ENCODE measurements at regions of chr11 and their contacts with region 1.

Region 1: DNA sequence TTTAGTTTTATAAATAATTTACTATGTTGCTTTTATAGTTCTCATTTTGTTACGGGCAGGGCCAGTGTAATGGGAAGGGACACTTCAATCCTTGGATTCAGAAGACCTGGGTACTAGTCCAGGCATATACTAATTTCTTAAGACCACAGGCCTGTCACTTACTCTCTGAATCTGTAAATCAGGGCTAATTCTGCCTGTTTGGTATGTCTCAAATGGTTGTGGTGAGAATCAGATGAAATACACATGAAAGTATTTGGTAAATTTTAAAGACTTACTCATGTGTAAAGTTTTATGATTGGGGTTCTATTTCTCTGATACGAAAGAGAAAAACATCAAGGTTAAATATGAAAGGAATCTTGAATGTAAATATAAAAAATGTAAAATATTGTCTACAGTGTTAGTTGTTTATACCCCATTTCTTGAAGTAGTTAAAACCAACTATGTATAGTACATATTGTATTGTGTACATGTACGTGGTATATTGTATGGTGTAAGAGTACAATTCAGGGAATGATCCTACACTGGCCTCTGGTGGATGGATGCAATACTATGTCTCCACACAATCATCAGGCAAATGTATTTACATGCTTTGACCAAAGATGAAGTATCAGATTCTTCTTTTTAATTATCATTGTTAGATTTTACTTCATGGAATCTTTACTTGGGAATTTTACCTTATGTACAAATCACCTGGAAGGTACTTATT is 24.5 kb upstream of the RAG2 start:
- DNase-seq: no peak
- ATAC-seq: no peak
- H3K4me3 ChIP-seq: no peak overlapping the region
- H3K27ac ChIP-seq: no peak overlapping the region
- H3K4me1 ChIP-seq: peaks cover 8 to 10% of the 10 kb centered on the region in 2 donors
- H3K27me3 ChIP-seq: no peaks in the 10 kb centered on the region
- CTCF ChIP-seq: no peak
- POLR2A ChIP-seq: no peak

Region 2: GRCh38 chr11:36488096-36488495 is 134.5 kb before region 1 on chr11:
- in situ Hi-C with region 1: no loop called
- intact Hi-C with region 1: no loop called
- DNase-seq: no peak
- ATAC-seq: no peak
- H3K4me3 ChIP-seq: no peak overlapping the region
- H3K27ac ChIP-seq: peak overlapping the region in 3 of 4 donors; percentile 16 to 54 (median 22)
- H3K4me1 ChIP-seq: peaks cover 11 to 20% of the 10 kb centered on the region in 2 donors
- H3K27me3 ChIP-seq: no peaks in the 10 kb centered on the region
- CTCF ChIP-seq: no peak
- POLR2A ChIP-seq: no peak

Region 3: DNA sequence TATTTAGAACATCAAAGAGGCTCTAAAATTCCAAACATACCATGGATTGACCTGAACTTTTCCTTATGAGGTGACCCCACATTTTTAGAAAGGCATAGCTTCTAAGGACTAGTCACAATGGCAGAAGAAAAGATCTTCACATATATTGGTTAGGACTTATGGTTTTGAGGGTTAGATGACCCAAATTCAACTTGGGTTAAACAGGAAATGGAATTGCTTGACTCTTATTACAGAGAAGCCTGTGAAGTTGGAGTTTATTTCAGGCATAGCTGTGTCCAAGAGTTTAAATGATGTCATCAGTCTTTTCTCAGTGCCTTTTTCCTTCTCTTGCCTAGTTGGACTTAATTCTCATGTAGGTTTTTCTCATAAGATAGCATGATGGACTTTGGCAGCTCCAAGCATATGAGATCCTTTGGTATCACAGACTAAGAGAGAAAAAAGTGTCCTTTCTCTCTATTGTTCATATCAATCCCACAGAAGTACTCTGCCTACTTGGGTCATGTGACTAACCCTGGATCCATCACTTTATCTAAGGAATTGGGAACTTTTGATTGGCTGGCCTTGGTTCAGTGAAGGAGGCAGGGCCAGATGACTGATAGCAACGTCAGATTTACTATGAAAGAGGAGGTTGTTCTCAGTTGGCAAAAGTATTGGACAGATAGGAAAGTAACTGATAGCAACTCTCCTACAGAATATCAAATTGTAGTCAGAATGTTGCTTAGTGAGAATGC is 72.0 kb before region 1 on chr11:
- in situ Hi-C with region 1: no loop called
- intact Hi-C with region 1: no loop called
- DNase-seq: no peak
- ATAC-seq: no peak
- H3K4me3 ChIP-seq: no peak overlapping the region
- H3K27ac ChIP-seq: no peak overlapping the region
- H3K4me1 ChIP-seq: no peaks in the 10 kb centered on the region
- H3K27me3 ChIP-seq: no peaks in the 10 kb centered on the region
- CTCF ChIP-seq: no peak
- POLR2A ChIP-seq: no peak

Region 4: GRCh38 chr11:36583667-36584066 is 38.9 kb before region 1 on chr11:
- in situ Hi-C with region 1: no loop called
- intact Hi-C with region 1: loop called (anchors 5 kb)
- DNase-seq: no peak
- ATAC-seq: no peak
- H3K4me3 ChIP-seq: no peak overlapping the region
- H3K27ac ChIP-seq: no peak overlapping the region
- H3K4me1 ChIP-seq: no peaks in the 10 kb centered on the region
- H3K27me3 ChIP-seq: peaks cover 0 to 2% (median 0%) of the 10 kb centered on the region in 3 donors
- CTCF ChIP-seq: no peak
- POLR2A ChIP-seq: no peak

Measured in gastrocnemius medialis (tissue), 4 donors.